ENCODE measurements at regions of chr7 and their contacts with region 1.

Region 1: DNA sequence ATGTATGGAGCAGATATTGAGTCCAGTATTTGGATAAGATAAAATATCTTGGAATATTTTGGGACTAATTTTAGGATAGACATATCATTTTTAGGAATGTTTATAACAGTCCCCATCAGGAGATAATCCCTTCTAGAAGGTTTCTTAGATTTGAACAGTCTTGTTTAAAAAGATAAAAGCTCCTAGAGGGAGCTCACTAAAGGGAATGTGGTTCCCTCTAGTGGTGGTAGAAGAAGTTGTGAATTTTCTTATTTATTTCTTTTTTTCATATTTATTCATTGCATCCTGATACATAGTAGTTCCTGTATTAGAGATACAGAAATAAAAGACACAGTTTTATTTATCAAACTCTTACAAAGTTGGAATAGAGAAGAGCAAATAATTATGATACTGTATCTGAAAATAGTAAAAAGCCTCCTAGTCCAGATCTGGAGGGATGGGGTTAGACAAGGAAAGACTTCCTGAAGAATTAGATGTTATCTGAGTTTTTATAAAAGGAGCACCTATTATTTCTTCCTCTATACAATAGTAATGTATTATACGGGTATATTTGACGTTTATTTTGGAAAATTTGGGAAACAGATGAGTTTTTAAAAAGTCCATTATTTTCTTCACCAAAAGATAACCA is 24.5 kb upstream of the KLF14 start:
- DNase-seq: no peak
- ATAC-seq: no peak
- H3K4me3 Mint-ChIP-seq: no peak overlapping the region
- H3K27ac Mint-ChIP-seq: no peak overlapping the region
- H3K4me1 Mint-ChIP-seq: no peaks in the 10 kb centered on the region
- H3K27me3 Mint-ChIP-seq: no peaks in the 10 kb centered on the region
- CTCF ChIP-seq: peak; percentile 42; the same call in 1 of the 2 replicates

Region 2: DNA sequence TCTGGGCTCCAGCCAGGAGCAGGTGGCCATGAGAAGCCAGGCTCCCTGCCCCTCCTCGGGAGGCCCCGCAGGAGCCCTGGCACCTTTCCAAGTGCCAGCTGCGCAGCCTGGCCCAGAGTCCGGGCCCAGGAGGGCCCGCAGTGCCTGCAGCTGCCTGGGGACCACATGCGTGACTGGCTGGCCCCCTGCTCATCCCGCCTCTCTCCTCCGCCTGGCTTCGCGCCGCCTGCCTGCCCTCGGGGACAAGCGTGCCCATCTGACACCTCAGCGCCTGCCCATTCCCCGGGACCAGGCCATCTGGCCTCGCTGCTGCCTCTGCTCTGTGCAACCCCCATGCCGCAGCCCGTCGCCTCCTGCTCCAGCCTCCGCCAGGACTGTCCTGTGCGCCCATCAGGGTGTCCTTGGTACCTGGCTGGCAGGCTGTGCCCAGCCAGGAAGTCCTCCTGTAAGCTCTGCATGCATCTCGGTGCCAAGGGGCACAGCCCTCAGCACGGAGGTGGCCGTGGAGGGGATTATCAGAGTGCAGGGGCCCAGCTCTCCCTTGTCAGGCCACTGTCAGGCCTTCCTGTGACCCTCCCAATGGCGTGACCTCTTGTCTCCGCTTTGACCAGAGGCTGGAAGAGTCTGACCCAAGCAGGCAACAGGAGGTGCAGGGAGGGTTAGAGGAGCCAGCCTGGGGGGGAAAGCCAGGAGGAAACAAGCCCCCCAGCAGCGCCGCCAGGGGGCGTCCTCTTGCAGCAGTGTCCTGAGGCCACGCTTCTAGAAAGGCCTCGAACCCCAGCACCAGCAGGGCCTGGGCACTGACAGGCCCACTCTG is 603.8 kb before region 1 on chr7:
- CTCF ChIA-PET with region 1: interaction called, 10 read pairs
- POLR2A ChIA-PET with region 1: no interaction called
- DNase-seq: peak; percentile 76
- ATAC-seq: peak; percentile 78
- H3K4me3 Mint-ChIP-seq: no peak overlapping the region
- H3K27ac Mint-ChIP-seq: no peak overlapping the region
- H3K4me1 Mint-ChIP-seq: peaks cover 3% of the 10 kb centered on the region
- H3K27me3 Mint-ChIP-seq: no peaks in the 10 kb centered on the region
- CTCF ChIP-seq: peak; percentile 82

Region 3: GRCh38 chr7:130733931-130734814 is 24.4 kb before region 1 on chr7 and contains the start of gene KLF14:
- CTCF ChIA-PET with region 1: interaction called, 20 read pairs
- POLR2A ChIA-PET with region 1: interaction called, 3 read pairs
- DNase-seq: peak; percentile 33
- ATAC-seq: peak; percentile 31
- H3K4me3 Mint-ChIP-seq: peak within 1 kb of the TSS; percentile 82
- H3K27ac Mint-ChIP-seq: no peak within 1 kb of the TSS
- H3K4me1 Mint-ChIP-seq: peaks cover 11% of the 10 kb centered on the region
- H3K27me3 Mint-ChIP-seq: peaks cover 90% of the 10 kb centered on the region
- CTCF ChIP-seq: no peak
- total RNA-seq, gene KLF14: not detected in 3 replicates

Region 4: DNA sequence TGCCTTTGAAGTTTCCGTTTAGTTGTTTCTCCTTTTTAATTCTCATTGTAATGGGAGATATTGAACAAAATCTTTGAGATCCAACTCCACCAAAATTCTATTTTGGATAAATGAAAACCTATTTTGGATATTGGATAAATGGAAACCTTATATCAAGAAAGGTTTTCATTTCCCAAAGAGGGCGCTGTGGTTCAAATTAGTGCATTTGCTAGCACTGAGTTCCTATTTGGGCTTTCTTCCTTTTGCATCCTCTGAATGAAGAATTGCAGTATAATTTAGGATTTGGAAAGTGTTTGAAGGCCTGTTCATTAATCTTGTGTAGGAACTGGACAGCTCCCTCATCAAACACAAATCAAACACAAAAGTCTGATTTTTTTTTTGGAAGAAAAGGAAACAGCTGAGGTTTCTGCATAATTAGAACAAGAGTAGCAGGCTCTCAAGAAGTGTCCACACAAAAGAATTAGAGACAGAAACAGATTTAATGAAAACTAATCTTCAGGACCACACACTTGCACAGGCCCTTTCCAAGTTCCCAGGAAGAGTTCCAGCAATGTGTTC is 56.3 kb after region 1 on chr7:
- CTCF ChIA-PET with region 1: no interaction called
- POLR2A ChIA-PET with region 1: no interaction called
- DNase-seq: no peak
- ATAC-seq: no peak
- H3K4me3 Mint-ChIP-seq: no peak overlapping the region
- H3K27ac Mint-ChIP-seq: no peak overlapping the region
- H3K4me1 Mint-ChIP-seq: no peaks in the 10 kb centered on the region
- H3K27me3 Mint-ChIP-seq: peaks cover 4% of the 10 kb centered on the region; the same call in 1 of the 2 replicates
- CTCF ChIP-seq: 0 out of 2 replicates have a peak, but pooled peaks have one; percentile 22